ENCODE measurements at regions of chr5 and their contacts with region 1.

Region 1: DNA sequence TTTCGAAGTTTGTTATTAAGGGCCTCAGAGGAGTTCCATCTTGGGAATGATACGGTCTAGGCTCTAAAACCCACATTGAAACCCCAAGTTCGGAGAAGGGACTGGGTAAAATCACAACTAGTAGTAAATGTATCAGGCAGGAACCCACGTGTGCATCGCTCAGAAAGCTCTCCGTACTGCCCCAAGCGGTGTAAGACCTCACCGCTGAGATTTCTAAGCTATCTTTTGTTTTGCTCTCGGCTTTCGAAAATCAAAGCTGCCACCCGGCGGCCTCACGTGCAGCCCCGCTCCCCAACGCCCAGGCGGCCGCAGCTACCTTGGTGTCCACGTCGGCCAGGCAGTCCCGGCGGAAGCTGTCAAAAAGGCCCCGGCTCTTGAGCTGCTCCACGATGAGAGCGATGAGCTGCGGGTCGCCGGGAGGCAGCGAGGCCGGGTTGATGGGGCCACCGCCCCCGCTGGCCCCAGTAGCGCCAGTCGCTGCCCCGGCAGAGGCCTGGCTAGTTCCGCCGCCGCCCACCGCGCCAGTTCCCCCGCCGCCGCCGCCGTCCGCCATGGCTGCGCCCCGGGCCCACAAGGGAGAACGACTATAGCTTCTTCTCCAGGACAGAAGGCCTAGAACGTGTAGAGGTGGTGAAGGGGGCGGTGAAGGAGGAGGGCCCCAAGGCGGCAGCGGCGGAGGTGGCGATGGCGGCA is 420 bp downstream of the BOD1 start:
- DNase-seq: peak; percentile 69 to 82 (median 75)
- H3K4me3 ChIP-seq: peak overlapping the region; percentile 18 to 83
- H3K4me3 Mint-ChIP-seq: peak overlapping the region; percentile 91 to 97 (median 93)
- H3K27ac ChIP-seq: peak overlapping the region; percentile 94
- H3K27ac Mint-ChIP-seq: peak overlapping the region; percentile 88 to 98 (median 95)
- H3K4me1 ChIP-seq: peaks cover 30% of the 10 kb centered on the region
- H3K4me1 Mint-ChIP-seq: peaks cover 34 to 54% (median 43%) of the 10 kb centered on the region in 4 donors
- H3K27me3 ChIP-seq: no peaks in the 10 kb centered on the region
- H3K27me3 Mint-ChIP-seq: no peaks in the 10 kb centered on the region

Region 2: GRCh38 chr5:172283020-172283861 is 1332.8 kb before region 1 on chr5 and contains the start of gene UBTD2:
- CTCF ChIA-PET with region 1: no interaction called
- POLR2A ChIA-PET with region 1: no interaction called
- intact Hi-C with region 1: loop called (anchors 5 kb)
- DNase-seq: peak; percentile 72 to 82 (median 76)
- H3K4me3 ChIP-seq: peak within 1 kb of the TSS; percentile 47 to 71
- H3K4me3 Mint-ChIP-seq: peak within 1 kb of the TSS; percentile 89 to 93 (median 91)
- H3K27ac ChIP-seq: peak within 1 kb of the TSS; percentile 62
- H3K27ac Mint-ChIP-seq: peak within 1 kb of the TSS; percentile 80 to 96 (median 87)
- H3K4me1 ChIP-seq: peaks cover 26% of the 10 kb centered on the region
- H3K4me1 Mint-ChIP-seq: peaks cover 14 to 34% (median 21%) of the 10 kb centered on the region in 4 donors
- H3K27me3 ChIP-seq: no peaks in the 10 kb centered on the region
- H3K27me3 Mint-ChIP-seq: no peaks in the 10 kb centered on the region
- total RNA-seq, gene UBTD2: 6.3 TPM

Region 3: DNA sequence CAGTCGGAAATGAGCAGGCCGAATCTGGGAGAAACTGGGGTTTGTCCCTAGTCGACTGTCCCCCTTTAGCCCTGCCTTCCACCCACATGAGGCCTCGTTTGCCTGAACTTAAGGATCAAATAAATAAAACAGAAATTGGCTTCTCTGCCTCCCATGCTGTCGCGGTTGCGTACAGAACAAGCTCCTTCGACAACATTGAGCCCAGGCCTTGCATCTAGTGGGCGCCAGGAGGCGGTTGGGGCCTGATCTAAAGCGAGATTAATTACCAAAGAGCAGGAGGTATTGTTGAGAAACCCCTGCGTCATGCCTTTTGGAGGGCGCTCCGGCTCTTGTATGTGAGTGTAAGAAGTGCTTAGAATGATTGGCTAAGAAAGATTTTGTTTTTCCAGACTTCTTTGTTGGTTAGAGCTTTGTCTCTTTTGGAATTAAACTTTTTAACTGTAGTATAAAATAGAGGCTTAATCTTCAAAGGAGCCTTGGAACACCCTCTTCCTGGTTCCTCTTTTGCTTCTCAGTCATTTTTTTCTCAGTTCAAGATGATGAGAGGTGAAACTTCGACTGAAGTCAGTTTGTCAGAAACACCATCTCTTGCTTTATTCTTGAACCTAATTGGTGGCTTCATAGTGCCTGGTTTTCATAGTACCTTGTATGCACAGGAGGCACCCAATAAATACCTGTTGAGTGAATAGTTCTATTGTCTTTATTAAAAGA is 631.6 kb before region 1 on chr5:
- CTCF ChIA-PET with region 1: interaction called, 3 read pairs
- POLR2A ChIA-PET with region 1: interaction called, 3 read pairs
- intact Hi-C with region 1: loop called (anchors 1 kb)
- DNase-seq: peak; percentile 75 to 91 (median 81)
- H3K4me3 ChIP-seq: peak overlapping the region; percentile 78 to 96
- H3K4me3 Mint-ChIP-seq: peak overlapping the region; percentile 92 to 99 (median 98)
- H3K27ac ChIP-seq: peak overlapping the region; percentile 94
- H3K27ac Mint-ChIP-seq: peak overlapping the region; percentile 95 to 99 (median 99)
- H3K4me1 ChIP-seq: peaks cover 55% of the 10 kb centered on the region
- H3K4me1 Mint-ChIP-seq: peaks cover 23 to 69% (median 46%) of the 10 kb centered on the region in 4 donors
- H3K27me3 ChIP-seq: no peaks in the 10 kb centered on the region
- H3K27me3 Mint-ChIP-seq: no peaks in the 10 kb centered on the region

Region 4: DNA sequence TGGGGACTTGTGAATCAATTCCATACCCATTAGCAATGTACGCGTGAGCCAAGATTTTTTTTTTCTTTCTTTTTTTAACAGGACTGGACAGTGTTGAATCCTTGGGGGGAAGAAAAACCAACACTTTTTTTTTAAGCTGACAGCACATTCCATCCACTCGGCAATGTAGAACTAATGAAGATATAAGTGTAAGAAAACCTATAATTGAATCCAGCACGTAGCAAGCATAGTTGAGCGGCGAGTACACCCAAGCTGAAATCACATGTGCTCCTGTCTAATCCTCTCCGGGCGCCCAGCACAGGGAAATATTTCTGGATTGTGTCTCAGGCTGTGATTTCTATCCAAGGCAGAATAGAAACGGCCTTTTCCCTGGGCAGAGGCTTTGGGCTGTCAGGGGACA is 117.7 kb before region 1 on chr5:
- CTCF ChIA-PET with region 1: no interaction called
- POLR2A ChIA-PET with region 1: no interaction called
- intact Hi-C with region 1: no loop called
- DNase-seq: no peak
- H3K4me3 ChIP-seq: no peak overlapping the region
- H3K4me3 Mint-ChIP-seq: no peak overlapping the region
- H3K27ac ChIP-seq: no peak overlapping the region
- H3K27ac Mint-ChIP-seq: no peak overlapping the region
- H3K4me1 ChIP-seq: no peaks in the 10 kb centered on the region
- H3K4me1 Mint-ChIP-seq: no peaks in the 10 kb centered on the region
- H3K27me3 ChIP-seq: no peaks in the 10 kb centered on the region
- H3K27me3 Mint-ChIP-seq: peaks cover 7 to 9% of the 10 kb centered on the region in 2 donors

Region 5: DNA sequence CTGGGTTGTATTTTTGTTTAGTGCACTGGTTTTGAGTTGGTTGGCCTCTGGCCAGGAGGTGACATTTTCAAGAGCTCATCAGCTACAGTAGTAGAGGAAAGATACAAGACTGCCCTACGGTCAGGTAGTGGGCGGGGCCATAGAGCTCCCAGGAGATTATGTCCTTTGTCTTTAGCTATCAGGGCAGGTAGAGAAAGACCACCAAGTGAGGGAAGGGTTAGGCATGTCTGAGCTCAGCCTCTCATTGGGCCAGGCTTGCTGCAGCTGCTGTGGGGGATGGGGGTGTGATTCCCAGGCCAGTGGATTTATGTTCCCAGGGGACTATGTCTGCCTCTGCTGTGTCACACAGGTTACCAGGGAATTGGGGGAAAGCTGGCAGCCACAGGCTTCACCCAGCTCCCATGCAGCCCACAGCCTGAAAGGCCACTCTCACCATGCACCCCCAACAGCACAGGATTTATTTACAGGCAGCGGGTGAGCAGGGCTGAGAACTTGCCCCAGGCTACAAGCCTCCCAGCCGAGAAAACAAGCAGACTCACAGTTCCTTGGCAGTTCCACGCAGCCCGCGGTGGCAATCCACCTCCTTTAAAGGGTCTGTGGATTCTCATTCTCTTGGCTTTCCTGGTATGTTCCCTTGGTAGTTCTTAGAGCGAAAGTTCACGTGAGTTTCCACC is 37.9 kb after region 1 on chr5:
- CTCF ChIA-PET with region 1: no interaction called
- POLR2A ChIA-PET with region 1: no interaction called
- intact Hi-C with region 1: no loop called
- DNase-seq: no peak
- H3K4me3 ChIP-seq: no peak overlapping the region
- H3K4me3 Mint-ChIP-seq: no peak overlapping the region
- H3K27ac ChIP-seq: no peak overlapping the region
- H3K27ac Mint-ChIP-seq: no peak overlapping the region
- H3K4me1 ChIP-seq: no peaks in the 10 kb centered on the region
- H3K4me1 Mint-ChIP-seq: no peaks in the 10 kb centered on the region
- H3K27me3 ChIP-seq: no peaks in the 10 kb centered on the region
- H3K27me3 Mint-ChIP-seq: peaks cover 14 to 19% of the 10 kb centered on the region in 2 donors

Region 6: DNA sequence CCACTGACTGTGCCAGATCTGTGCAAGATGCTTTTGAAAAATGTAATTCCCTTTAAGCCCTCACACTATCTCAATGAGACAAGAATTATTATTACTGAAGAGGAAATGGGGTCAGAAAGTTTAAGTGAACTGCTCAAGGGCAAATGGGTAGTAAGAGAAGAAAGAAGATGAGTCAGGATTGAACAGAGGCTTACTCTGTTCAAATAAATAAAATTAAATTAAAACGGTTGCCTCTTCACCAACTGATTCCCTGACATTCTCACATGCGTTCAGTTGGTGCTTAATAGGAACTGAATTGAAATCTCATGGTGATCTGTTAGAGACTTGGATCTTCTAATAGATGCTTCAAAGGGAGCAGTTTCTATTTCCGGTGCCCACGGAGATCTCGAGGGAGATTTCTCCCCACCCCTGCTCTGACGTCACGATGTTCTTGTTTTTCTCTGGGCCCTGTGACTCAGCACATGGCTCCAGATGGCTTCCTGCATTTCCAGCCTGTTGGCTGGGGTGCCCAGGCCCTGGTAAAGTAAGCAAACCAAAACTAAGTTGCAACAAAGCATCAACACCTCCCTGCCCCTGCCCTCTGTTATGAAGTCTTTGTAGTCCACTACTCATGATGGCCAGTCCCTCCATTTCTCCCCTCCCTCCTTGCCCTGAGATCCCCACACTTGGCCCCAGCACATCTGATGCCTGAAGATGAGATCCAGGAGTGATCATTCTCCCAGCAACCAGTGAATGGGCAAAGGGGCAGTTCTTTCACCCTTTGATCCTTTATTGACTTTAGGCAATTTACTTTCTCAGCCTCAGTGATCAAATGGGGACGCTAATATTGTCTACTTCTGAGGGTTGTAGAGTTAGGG is 166.0 kb after region 1 on chr5:
- CTCF ChIA-PET with region 1: interaction called, 3 read pairs
- POLR2A ChIA-PET with region 1: no interaction called
- intact Hi-C with region 1: loop called (anchors 10 kb)
- DNase-seq: peak; percentile 71 to 84 (median 73)
- H3K4me3 ChIP-seq: no peak overlapping the region
- H3K4me3 Mint-ChIP-seq: peak overlapping the region in 7 of 8 donors; percentile 5 to 64 (median 57)
- H3K27ac ChIP-seq: peak overlapping the region; percentile 6
- H3K27ac Mint-ChIP-seq: peak overlapping the region; percentile 81 to 96 (median 90)
- H3K4me1 ChIP-seq: peaks cover 21% of the 10 kb centered on the region
- H3K4me1 Mint-ChIP-seq: peaks cover 11 to 50% (median 20%) of the 10 kb centered on the region in 4 donors
- H3K27me3 ChIP-seq: no peaks in the 10 kb centered on the region
- H3K27me3 Mint-ChIP-seq: no peaks in the 10 kb centered on the region

Region 7: DNA sequence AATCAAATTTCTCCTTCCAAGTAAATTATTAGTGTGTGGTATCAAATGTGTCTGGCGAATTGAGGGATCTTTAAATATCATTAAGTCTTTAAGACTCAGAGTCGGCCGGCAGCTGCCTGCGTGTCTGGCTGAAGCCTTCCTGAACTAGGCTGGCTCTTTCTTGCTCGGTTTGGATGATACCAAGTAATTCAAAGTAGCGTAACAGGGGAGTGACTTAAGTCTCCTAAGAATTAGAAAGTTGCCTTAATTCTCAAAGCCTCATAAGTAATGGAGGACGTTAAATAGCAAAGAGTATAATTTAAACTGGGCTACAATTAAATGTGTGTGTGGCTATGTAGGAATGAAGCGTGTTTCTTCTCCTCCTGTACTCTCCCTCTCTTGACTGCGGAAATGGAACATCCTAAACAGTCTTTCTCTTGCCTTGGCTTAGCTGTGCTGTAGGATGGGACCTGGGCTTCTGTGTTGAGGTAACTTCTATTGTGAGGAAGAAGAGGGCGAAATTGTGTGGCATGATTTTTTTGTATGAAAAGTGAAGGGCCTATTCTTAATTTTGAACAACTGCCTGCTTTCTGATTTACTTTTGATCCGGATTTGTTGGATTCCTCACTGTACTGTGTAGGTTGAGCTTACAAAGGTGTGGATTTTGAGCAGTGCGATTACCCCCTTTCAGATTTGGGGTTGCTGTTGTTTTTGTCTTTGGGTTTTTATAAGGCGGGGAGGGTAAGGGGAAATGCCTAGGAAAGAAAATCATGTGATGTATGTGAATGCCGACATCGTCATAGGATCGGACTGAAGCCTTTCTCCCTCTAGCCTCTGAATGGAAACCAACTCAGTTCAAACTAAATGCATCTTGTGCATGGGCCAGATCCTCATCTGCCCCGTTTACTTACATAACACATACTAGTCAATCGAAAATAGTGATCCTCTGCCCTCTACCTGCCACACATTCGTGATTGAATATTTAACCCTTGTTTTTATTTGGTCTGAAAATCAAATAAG is 302.1 kb after region 1 on chr5:
- CTCF ChIA-PET with region 1: interaction called, 116 read pairs
- POLR2A ChIA-PET with region 1: interaction called, 42 read pairs
- intact Hi-C with region 1: loop called (anchors 1 kb)
- DNase-seq: peak; percentile 78 to 87 (median 83)
- H3K4me3 ChIP-seq: peak overlapping the region; percentile 49 to 74
- H3K4me3 Mint-ChIP-seq: no peak overlapping the region
- H3K27ac ChIP-seq: peak overlapping the region; percentile 89
- H3K27ac Mint-ChIP-seq: no peak overlapping the region
- H3K4me1 ChIP-seq: peaks cover 26% of the 10 kb centered on the region
- H3K4me1 Mint-ChIP-seq: peaks cover 0 to 8% (median 3%) of the 10 kb centered on the region in 4 donors
- H3K27me3 ChIP-seq: no peaks in the 10 kb centered on the region
- H3K27me3 Mint-ChIP-seq: no peaks in the 10 kb centered on the region

Region 8: DNA sequence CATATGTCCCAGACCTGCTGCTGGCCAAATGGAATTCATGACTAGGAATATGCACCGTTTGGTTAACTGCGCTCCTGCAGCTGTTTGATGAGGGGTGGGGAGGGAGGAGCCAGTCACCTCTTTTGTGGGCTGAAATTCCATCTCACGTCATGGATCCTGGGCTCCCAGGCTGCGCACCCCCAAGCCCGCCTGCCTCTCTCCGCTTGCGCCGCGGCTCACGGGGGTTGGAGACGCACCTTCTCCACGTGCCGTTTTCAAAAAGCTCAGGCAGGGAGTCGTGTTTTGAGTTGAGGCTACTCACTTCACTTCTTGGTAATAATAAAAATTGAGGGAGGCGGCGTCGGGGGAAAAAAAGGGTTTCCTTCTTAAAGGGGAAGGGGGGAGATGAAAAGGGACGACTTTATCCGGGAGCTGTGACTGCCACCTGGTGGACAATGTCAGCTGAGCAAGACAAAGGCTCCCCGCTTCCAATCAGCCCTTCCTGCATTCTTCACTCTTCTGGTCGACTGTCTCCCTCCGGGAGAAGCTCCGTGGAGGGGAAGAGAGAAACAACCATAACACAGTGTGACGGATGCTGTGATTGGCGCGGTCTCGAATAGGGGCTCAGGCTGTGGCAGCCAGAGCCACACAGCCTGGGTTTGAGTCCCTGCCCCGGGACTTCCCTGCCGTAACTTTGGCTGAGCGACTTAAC is 357.0 kb after region 1 on chr5:
- CTCF ChIA-PET with region 1: interaction called, 211 read pairs
- POLR2A ChIA-PET with region 1: interaction called, 12 read pairs
- intact Hi-C with region 1: loop called (anchors 1 kb)
- DNase-seq: peak; percentile 64 to 73 (median 70)
- H3K4me3 ChIP-seq: peak overlapping the region in 1 of 2 donors; percentile 61
- H3K4me3 Mint-ChIP-seq: peak overlapping the region; percentile 66 to 81 (median 77)
- H3K27ac ChIP-seq: no peak overlapping the region
- H3K27ac Mint-ChIP-seq: peak overlapping the region in 1 of 7 donors; percentile 14
- H3K4me1 ChIP-seq: peaks cover 12% of the 10 kb centered on the region
- H3K4me1 Mint-ChIP-seq: peaks cover 5 to 11% (median 8%) of the 10 kb centered on the region in 4 donors
- H3K27me3 ChIP-seq: no peaks in the 10 kb centered on the region
- H3K27me3 Mint-ChIP-seq: peaks cover 10 to 12% of the 10 kb centered on the region in 2 donors

Measured in CD4-positive, alpha-beta memory T cell (primary cell).